ENCODE measurements at regions of chr19 and their contacts with region 1.

Region 1: DNA sequence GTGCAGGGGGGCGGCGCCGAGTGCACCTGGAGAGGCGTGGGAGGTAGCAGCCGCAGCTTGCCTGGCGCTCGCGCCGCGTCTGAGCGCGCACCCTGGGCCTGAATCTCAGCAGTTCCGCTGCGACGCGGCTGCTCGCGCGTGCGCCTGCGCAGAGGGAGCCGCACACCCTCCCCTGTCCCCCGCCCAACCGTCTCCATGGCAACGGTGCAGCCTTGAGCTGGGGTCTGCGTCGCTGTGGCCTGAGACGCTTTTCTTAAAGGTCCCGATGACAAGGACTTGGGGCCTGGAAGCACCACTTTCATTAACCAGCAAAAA is at the start of gene PNMA8B:
- DNase-seq: peak; percentile 66 to 91 (median 79)
- ATAC-seq: peak; percentile 83 to 90 (median 88)
- H3K4me3 ChIP-seq: peak within 1 kb of the TSS in 2 of 4 donors; percentile 30 to 42
- H3K27ac ChIP-seq: no peak within 1 kb of the TSS
- H3K4me1 ChIP-seq: peaks cover 0 to 6% (median 0%) of the 10 kb centered on the region in 3 donors
- H3K27me3 ChIP-seq: no peaks in the 10 kb centered on the region
- CTCF ChIP-seq: no peak
- total RNA-seq, gene PNMA8B: 0.47 to 1.4 (median 0.68) TPM

Region 2: DNA sequence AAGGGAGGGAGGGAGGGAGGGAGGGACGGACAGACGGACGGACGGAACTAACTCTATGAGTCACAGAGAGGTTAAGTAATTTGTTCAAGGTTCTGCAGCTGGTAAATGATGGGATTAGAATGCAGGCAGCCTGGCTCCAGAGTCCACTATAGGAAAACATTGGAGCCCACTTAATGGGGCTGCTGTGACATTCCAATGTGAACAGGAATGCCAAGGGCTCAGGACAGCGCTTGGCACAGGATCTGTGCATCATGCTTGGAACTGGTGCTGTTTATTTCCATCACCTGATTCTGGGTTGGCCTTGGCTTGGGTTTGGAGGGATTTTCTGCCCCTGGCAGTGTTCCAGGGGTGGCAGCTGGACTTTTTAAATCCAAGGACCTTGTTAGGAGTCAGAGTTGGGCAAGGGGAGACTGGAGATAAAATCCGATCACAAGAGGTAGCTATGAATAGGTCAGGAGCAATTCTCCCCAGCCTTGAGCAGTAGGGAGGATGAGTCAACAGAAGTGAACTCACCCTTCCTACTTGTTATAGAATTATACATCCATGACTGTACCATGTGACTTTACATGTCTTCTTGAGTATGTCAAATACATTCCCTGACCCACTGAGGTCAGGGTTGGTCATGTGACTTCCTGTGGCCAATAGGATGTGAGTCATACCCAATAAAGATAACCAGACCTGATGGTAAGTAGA is 206.7 kb before region 1 on chr19:
- intact Hi-C with region 1: loop called in 2 of 3 experiments (anchors 5 to 10 kb)
- DNase-seq: no peak
- ATAC-seq: peak in 2 of 4 donors; percentile 23 to 68
- H3K4me3 ChIP-seq: no peak overlapping the region
- H3K27ac ChIP-seq: no peak overlapping the region
- H3K4me1 ChIP-seq: no peaks in the 10 kb centered on the region
- H3K27me3 ChIP-seq: no peaks in the 10 kb centered on the region
- CTCF ChIP-seq: no peak